Caco-2 (cell line): ENCODE measurements at regions of chr4 and their contacts with region 1.

Region 1: GRCh38 chr4:98995183-98996055 is at the start of gene METAP1:
- DNase-seq: peak; percentile 96
- H3K4me3 ChIP-seq: peak within 1 kb of the TSS; percentile 97
- H3K4me3 Mint-ChIP-seq: peak within 1 kb of the TSS; percentile 85
- H3K27ac Mint-ChIP-seq: peak within 1 kb of the TSS; percentile 81
- H3K4me1 ChIP-seq: peaks cover 26% of the 10 kb centered on the region
- H3K4me1 Mint-ChIP-seq: peaks cover 25% of the 10 kb centered on the region
- H3K27me3 ChIP-seq: no peaks in the 10 kb centered on the region
- H3K27me3 Mint-ChIP-seq: no peaks in the 10 kb centered on the region
- CTCF ChIP-seq: peak; percentile 39 to 80
- total RNA-seq, gene METAP1: 75.2 and 83.0 TPM in 2 replicates

Region 2: DNA sequence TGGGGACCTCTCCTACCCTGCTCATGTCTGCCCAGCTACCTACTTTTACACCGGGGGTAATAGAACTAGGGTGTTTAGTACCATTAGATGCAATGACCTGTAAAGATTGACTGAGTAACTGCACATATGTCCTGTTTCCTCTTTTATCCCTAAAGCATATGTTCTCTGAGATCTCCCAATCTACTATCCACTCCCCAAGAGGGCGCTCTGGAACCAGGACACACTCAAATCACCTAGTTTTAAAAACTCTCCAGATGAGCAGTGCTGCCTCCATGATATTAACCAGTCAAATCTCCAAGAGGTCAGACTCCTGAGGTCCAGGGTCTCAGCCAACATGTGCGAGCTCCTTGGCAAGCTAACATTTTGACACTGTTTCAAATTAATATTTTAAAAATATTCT is 250.1 kb before region 1 on chr4:
- CTCF ChIA-PET with region 1: no interaction called
- POLR2A ChIA-PET with region 1: no interaction called
- intact Hi-C with region 1: loop called (anchors 5 kb)
- DNase-seq: peak; percentile 42 to 44
- H3K4me3 ChIP-seq: no peak overlapping the region
- H3K4me3 Mint-ChIP-seq: no peak overlapping the region
- H3K27ac Mint-ChIP-seq: peak overlapping the region; percentile 31
- H3K4me1 ChIP-seq: peaks cover 37% of the 10 kb centered on the region
- H3K4me1 Mint-ChIP-seq: peaks cover 22% of the 10 kb centered on the region
- H3K27me3 ChIP-seq: no peaks in the 10 kb centered on the region
- H3K27me3 Mint-ChIP-seq: no peaks in the 10 kb centered on the region
- CTCF ChIP-seq: peak; percentile 8 to 18

Region 3: DNA sequence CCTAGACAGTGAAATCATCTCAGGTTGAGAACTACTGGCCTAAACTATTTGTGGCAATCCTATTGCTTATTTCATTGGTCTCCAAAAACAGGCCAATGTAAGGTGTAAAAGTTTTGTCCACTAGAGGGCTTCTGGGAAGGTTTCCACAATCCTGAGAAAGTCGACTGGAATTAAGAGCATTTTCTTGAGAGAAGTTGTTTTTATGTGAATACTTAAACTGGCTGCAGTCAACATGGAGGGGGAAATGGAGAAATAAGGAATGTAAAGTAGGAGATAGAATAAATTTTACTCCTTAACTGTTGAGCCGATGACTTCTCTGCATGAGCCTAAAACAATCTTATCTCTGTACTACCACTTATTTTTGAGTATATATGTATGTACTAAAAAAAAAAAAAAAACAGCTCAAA is 55.5 kb before region 1 on chr4:
- CTCF ChIA-PET with region 1: no interaction called
- POLR2A ChIA-PET with region 1: no interaction called
- intact Hi-C with region 1: loop called (anchors 1 kb)
- DNase-seq: peak in 1 of 2 experiments; percentile 59
- H3K4me3 ChIP-seq: no peak overlapping the region
- H3K4me3 Mint-ChIP-seq: no peak overlapping the region
- H3K27ac Mint-ChIP-seq: no peak overlapping the region
- H3K4me1 ChIP-seq: peaks cover 28% of the 10 kb centered on the region
- H3K4me1 Mint-ChIP-seq: peaks cover 27% of the 10 kb centered on the region
- H3K27me3 ChIP-seq: no peaks in the 10 kb centered on the region
- H3K27me3 Mint-ChIP-seq: no peaks in the 10 kb centered on the region
- CTCF ChIP-seq: peak; percentile 61 to 75

Region 4: DNA sequence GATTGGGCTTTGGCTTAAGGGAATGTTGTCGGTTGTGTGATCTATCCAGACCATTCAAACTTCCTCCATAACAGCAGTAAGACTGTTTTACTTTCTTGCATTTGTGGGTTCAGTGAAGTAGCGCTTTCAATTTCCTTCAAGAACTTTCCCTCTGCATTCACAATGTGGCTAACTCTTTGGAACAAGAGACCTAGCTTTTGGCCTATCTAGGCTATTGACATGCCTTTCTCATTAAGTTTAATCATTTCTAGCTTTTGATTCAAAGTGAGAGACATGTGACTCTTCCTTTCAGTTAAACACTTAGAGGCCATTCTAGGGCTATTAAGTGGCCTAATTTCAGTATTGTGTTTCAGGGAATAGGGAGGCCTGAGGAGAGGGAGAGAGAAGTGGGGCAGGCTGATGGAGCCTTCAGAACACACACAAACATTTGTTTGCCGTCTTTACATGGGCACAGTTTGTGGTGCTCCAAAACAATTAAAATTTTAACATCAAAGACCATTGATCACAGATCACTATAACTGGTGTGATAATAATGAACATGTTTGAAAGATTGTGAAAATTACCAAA is 59.1 kb after region 1 on chr4:
- CTCF ChIA-PET with region 1: interaction called, 80 read pairs
- POLR2A ChIA-PET with region 1: interaction called, 9 read pairs
- intact Hi-C with region 1: loop called (anchors 1 kb)
- DNase-seq: no peak
- H3K4me3 ChIP-seq: no peak overlapping the region
- H3K4me3 Mint-ChIP-seq: no peak overlapping the region
- H3K27ac Mint-ChIP-seq: peak overlapping the region; percentile 69
- H3K4me1 ChIP-seq: peaks cover 6% of the 10 kb centered on the region; the same call in 1 of the 2 replicates
- H3K4me1 Mint-ChIP-seq: peaks cover 8% of the 10 kb centered on the region
- H3K27me3 ChIP-seq: no peaks in the 10 kb centered on the region
- H3K27me3 Mint-ChIP-seq: no peaks in the 10 kb centered on the region
- CTCF ChIP-seq: no peak

Region 5: DNA sequence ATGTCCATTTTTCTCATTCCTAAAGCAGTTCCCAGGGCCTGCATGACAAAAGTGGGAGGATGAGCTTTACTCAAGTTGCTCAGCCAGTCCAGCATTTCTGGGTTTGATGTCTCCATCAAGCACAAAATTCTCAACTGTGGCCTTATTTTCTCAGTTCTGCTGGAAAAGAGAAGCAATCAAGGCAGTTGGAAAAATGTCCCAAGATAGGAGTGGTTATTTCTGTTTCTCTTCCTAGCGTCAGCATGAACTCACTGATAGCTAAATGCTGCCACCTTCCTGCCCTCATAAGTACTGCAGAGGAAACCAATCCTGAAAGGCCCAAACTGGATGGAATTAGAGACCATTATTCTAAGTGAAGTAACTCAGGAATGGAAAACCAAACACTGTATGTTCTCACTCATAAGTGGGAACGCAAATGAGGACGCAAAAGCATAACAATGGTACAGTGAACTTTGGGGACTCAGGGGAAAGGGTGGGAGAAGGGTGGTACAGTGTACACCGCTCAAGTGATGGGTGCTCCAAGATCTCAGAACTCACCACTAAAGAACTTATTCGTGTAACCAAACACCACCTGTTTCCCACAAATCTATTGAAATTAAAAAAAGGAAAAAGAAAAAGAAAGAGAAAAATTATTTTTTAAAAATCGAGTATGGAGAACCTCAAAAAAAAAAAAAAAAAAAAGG is 410.2 kb after region 1 on chr4:
- CTCF ChIA-PET with region 1: interaction called, 4 read pairs
- POLR2A ChIA-PET with region 1: interaction called, 8 read pairs
- intact Hi-C with region 1: loop called (anchors 1 kb)
- DNase-seq: peak; percentile 69 to 78
- H3K4me3 ChIP-seq: no peak overlapping the region
- H3K4me3 Mint-ChIP-seq: no peak overlapping the region
- H3K27ac Mint-ChIP-seq: peak overlapping the region; percentile 37
- H3K4me1 ChIP-seq: peaks cover 23% of the 10 kb centered on the region
- H3K4me1 Mint-ChIP-seq: peaks cover 11% of the 10 kb centered on the region
- H3K27me3 ChIP-seq: no peaks in the 10 kb centered on the region
- H3K27me3 Mint-ChIP-seq: no peaks in the 10 kb centered on the region
- CTCF ChIP-seq: peak; percentile 77 to 88